Activated naive CD4-positive, alpha-beta T cell treated with anti-CD3 and anti-CD28 coated beads for 36 hours (primary cell): ENCODE measurements at regions of chr14 and their contacts with region 1.

Region 1: GRCh38 chr14:96362965-96363756 is at the starts of genes ATG2B and GSKIP:
- DNase-seq: peak; percentile 97
- H3K4me3 Mint-ChIP-seq: peak within 1 kb of the TSS; percentile 92
- H3K27ac Mint-ChIP-seq: peak within 1 kb of the TSS; percentile 84
- H3K4me1 Mint-ChIP-seq: peaks cover 54% of the 10 kb centered on the region
- H3K27me3 Mint-ChIP-seq: no peaks in the 10 kb centered on the region
- total RNA-seq, gene ATG2B: 12.8 to 15.3 TPM
- total RNA-seq, gene GSKIP: 17.8 to 20.4 TPM

Region 2: GRCh38 chr14:95534299-95535225 is 828.6 kb before region 1 on chr14 and contains the start of gene GLRX5:
- CTCF ChIA-PET with region 1: no interaction called
- intact Hi-C with region 1: loop called (anchors 1 kb)
- DNase-seq: peak; percentile 99
- H3K4me3 Mint-ChIP-seq: peak within 1 kb of the TSS; percentile 92
- H3K27ac Mint-ChIP-seq: peak within 1 kb of the TSS; percentile 82
- H3K4me1 Mint-ChIP-seq: peaks cover 61% of the 10 kb centered on the region
- H3K27me3 Mint-ChIP-seq: no peaks in the 10 kb centered on the region
- total RNA-seq, gene GLRX5: 34.2 to 34.6 TPM

Region 3: DNA sequence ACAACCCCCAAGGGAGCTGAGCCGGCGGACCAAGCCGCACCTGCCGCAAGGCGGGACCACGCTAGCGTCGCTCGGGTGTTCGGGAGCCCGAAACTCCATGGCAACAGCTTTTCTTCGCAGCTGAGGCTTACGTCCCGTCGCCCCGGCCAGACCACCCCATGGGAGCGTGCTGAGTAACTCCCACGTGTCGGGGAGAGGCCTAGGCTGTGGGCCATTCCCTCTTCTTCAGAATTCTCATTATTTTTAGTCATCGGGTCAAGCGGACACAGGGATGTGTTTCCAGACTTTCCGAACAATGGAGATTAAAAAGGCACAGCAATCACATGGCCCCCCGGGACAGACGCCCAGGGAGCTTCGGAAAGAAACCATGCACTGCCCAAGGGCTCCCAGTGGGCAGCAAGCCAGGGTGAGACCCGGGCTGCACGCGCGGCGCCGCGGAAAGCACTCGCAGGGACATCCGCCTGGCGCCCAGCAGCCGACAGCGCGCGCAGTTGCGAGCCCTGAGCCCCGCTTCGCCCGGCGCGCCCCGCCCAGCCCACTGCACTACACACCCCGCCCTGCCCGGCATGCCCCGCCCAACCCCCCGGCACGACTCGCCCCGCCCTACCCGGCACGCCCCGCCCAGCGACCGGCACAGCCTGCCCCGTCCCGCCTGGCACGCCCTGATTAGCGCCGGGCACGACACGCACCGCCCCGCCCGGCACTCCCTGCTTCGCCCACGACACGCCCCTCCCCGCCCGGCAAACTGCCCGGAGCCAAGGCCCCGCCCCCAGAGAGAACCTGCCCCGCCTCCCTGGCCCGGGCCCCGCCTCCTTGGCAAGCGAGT is 28.3 kb after region 1 on chr14:
- CTCF ChIA-PET with region 1: no interaction called
- intact Hi-C with region 1: loop called (anchors 1 kb)
- DNase-seq: peak; percentile 99
- H3K4me3 Mint-ChIP-seq: peak overlapping the region; percentile 85
- H3K27ac Mint-ChIP-seq: peak overlapping the region; percentile 41
- H3K4me1 Mint-ChIP-seq: peaks cover 3% of the 10 kb centered on the region
- H3K27me3 Mint-ChIP-seq: peaks cover 4% of the 10 kb centered on the region

Region 4: DNA sequence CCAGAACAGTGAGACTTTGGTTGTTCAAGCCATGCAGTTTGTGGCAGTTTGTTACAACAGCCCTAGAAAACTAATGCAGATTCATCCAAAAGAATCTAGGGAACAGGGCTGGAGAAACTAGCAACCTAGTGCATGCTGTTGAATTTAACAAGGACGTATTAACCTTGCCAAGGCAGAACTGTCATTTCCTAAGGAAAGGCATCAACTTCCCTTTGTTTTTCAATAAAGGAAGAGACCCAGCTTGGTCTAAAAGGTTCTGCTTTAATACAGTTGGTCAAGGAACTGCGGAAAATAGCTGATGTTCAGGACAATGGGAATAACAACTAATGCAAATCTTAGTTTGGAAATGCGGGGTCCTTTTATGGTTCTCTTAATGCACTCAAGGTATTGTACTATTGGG is 40.2 kb after region 1 on chr14:
- CTCF ChIA-PET with region 1: no interaction called
- intact Hi-C with region 1: no loop called
- DNase-seq: no peak
- H3K4me3 Mint-ChIP-seq: no peak overlapping the region
- H3K27ac Mint-ChIP-seq: no peak overlapping the region
- H3K4me1 Mint-ChIP-seq: no peaks in the 10 kb centered on the region
- H3K27me3 Mint-ChIP-seq: no peaks in the 10 kb centered on the region

Region 5: DNA sequence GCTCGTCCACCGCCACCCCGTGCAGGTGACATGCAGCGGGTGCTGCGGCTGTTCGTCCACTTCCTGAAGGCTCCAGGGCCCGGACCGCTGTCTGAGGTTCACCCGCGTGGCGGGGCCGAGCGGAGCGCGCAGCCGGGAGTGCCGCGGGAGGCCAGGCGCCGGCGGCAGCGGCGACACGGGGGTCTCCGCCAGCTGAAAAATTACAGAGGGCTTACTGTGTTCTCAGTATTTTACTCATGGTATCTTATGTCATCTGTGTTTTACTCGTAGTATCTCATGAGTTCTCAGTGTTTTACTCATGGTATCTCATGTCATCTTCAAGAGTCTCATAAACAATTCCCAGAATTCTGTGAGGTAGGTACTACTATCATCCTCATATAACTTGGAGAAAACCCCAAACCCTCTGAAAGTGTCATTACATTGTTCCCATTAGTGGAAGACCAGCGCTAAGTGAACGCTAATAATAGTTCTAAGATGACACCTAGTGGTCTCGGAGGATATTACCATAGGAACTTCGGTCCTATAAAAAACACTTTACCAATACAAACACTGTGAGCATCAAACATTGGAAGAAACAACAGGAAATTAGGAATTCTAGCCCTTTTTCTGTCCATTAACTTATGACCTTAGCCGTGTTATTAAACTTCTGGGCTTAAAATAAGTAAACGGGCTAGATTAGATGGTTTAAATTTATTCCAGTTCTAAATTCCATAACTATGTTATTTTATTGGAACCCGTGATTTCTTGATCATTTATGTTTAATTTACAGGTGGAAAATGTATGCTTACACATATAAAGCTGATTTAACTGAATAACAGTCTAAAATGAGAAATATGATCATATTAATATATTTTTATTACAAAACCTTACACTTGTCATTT is 61.2 kb after region 1 on chr14:
- CTCF ChIA-PET with region 1: no interaction called
- intact Hi-C with region 1: loop called (anchors 5 kb)
- DNase-seq: peak; percentile 33
- H3K4me3 Mint-ChIP-seq: peak overlapping the region; percentile 64
- H3K27ac Mint-ChIP-seq: no peak overlapping the region
- H3K4me1 Mint-ChIP-seq: peaks cover 2% of the 10 kb centered on the region
- H3K27me3 Mint-ChIP-seq: peaks cover 4% of the 10 kb centered on the region

Region 6: GRCh38 chr14:96501742-96502617 is 138.8 kb after region 1 on chr14 and contains the start of gene PAPOLA:
- CTCF ChIA-PET with region 1: no interaction called
- intact Hi-C with region 1: loop called (anchors 1 kb)
- DNase-seq: peak; percentile 95
- H3K4me3 Mint-ChIP-seq: peak within 1 kb of the TSS; percentile 89
- H3K27ac Mint-ChIP-seq: peak within 1 kb of the TSS; percentile 93
- H3K4me1 Mint-ChIP-seq: peaks cover 34% of the 10 kb centered on the region
- H3K27me3 Mint-ChIP-seq: no peaks in the 10 kb centered on the region
- total RNA-seq, gene PAPOLA: 162 to 181 TPM

Region 7: GRCh38 chr14:96796851-96797581 is 433.9 kb after region 1 on chr14 and contains the start of gene VRK1:
- CTCF ChIA-PET with region 1: no interaction called
- intact Hi-C with region 1: loop called (anchors 2 kb)
- DNase-seq: peak; percentile 96
- H3K4me3 Mint-ChIP-seq: peak within 1 kb of the TSS; percentile 92
- H3K27ac Mint-ChIP-seq: peak within 1 kb of the TSS; percentile 84
- H3K4me1 Mint-ChIP-seq: peaks cover 20% of the 10 kb centered on the region
- H3K27me3 Mint-ChIP-seq: no peaks in the 10 kb centered on the region
- total RNA-seq, gene VRK1: 64.9 to 74.3 TPM